GM10248 (cell line): ENCODE measurements at regions of chr2 and their contacts with region 1.

Region 1: DNA sequence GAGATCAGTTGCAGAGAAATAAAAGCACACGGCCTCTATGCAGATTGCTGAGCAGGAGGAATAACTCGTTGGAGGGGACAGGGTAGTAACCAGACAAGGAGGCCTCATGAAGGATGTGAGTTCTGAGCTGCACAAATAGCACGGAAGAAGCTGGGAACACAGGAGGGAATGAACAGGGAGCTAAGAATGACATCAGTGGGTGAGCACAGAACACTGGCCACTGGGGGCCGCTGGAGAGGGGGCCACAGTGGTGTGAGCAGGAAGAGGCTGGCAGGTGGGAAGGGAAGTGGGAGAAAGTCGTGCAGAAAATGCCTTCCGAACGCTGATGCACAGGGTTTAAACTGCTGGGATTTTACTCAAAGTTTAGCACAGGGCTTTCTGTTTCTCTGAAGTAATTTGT is 61.0 kb downstream of the ZAP70 start:
- DNase-seq: no peak
- CTCF ChIP-seq: peak; percentile 34

Region 2: DNA sequence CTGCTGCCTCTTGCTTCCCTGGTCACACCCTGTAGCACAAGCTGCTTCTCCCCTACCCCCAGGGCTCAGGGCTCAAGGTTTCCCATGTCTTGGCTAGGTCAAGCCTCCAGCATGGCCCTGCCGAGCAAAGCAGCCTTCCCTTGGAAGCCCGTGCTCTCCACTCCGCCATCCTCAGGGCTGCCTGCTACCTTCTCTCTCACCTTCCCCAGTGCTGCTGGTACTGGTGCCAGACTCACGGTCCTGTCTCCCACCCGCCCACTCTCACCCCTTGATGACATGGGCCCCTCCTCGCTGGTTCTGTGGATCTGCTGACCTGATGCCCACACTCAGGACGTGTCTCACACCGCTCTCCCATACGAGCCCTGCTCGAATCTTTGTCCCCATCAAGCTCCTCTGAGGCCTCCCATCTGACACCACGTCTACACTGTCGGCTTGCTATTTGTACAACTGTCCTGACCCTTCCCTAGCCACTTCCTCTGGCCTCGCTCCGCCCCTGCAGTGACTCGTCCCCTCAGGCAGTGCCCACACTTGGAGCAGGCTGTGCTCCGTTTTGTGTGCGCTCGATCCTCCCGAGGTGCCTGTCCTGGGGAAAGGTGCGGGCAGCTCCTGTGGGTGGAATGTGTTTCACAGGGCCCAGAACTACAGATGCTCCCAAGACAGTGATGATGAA is 11.1 kb before region 1 on chr2:
- CTCF ChIA-PET with region 1: interaction called, 20 read pairs
- POLR2A ChIA-PET with region 1: no interaction called
- DNase-seq: no peak
- CTCF ChIP-seq: no peak

Region 3: DNA sequence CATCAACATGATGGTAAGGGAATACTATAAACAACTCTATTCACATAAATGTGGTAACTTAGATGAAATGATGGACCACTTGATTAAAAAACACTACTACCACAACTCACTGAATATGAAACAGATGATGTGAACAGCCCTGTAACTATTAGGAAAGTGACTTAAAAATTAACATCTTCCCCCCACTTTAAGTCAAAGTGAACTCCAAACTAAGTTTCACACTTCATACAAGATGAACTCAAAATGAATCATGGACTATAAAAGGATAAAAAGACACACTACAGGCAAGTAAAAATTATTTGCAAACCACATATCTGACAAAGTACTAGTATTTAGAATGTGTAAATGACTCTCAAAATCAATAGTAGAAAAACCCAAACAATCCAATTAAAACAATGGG is 10.5 kb after region 1 on chr2:
- CTCF ChIA-PET with region 1: no interaction called
- POLR2A ChIA-PET with region 1: no interaction called
- DNase-seq: no peak
- CTCF ChIP-seq: no peak

Region 4: DNA sequence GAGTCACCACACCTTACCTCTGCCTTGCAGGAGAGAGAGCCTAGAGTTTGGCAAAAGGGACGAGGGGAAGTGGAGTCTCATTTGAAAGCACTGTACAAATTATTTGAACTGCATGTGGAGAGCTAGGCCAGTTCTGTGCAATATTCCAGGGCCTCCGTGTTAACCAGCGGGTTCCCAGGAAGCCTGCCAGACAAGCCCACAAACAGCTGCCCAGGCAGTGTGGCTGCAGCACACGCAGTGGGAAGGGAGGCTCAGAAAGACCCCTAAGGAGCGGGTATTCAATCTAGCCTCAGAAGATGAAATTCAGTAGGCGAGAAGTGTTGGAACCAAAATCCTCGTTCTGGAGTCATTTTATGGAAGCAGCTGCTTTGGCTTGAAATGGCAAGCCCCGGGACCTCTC is 602.6 kb after region 1 on chr2:
- CTCF ChIA-PET with region 1: no interaction called
- POLR2A ChIA-PET with region 1: no interaction called
- DNase-seq: no peak
- CTCF ChIP-seq: no peak